PC-9 (cell line): ENCODE measurements at regions of chr16 and their contacts with region 1.

Region 1: DNA sequence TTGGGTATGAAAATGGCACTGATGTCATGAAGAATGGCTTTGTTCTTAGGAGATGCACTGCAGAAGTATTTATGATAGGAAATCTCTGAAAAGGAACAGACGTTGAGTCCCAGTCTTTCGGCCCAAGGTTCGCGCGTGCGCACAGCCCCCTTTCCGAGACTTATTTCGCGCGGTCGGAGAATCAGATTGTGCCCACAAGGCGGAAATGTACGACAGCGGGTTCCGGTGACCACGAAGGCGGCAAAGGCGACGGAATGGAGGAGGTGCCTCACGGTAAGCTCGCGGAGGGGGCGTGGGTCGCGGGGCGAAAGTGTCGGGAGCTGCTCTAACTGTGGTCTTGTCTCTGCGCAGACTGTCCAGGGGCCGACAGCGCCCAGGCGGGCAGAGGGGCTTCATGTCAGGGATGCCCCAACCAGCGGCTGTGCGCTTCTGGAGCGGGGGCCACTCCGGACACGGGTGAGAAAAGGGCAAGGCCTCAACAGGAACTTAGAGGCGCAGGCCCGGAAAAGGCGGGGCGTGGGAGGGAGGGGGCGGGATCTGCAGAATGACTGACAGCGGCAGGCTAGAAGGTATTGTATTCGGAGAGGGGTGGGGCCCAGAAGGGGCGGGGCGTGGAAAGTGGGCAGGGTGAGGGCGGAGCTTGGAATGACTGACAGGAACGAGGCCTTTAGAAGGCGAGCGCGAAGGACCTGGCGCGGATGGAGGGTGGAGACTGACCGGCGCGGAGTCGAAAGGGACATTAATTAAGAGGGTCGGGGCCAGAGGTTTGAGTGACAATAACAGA is at the start of gene NUBP1:
- DNase-seq: peak; percentile 93 to 99
- H3K4me3 ChIP-seq: peak within 1 kb of the TSS; percentile 69
- H3K27ac ChIP-seq: peak within 1 kb of the TSS; percentile 88
- H3K4me1 ChIP-seq: peaks cover 14% of the 10 kb centered on the region
- H3K27me3 ChIP-seq: no peaks in the 10 kb centered on the region
- CTCF ChIP-seq: no peak
- total RNA-seq, gene NUBP1: 21.0 and 28.9 TPM in 2 replicates

Region 2: GRCh38 chr16:10876799-10877341 is 133.1 kb after region 1 on chr16 and contains the start of gene CIITA:
- CTCF ChIA-PET with region 1: no interaction called
- POLR2A ChIA-PET with region 1: no interaction called
- intact Hi-C with region 1: loop called (anchors 5 kb)
- DNase-seq: peak; percentile 68 to 72
- H3K4me3 ChIP-seq: no peak within 1 kb of the TSS
- H3K27ac ChIP-seq: no peak within 1 kb of the TSS
- H3K4me1 ChIP-seq: peaks cover 3% of the 10 kb centered on the region
- H3K27me3 ChIP-seq: peaks cover 26% of the 10 kb centered on the region
- CTCF ChIP-seq: no peak
- total RNA-seq, gene CIITA: 1.2 and 1.7 TPM in 2 replicates

Region 3: GRCh38 chr16:10942233-10943063 is 198.6 kb after region 1 on chr16 and contains the start of gene DEXI:
- CTCF ChIA-PET with region 1: no interaction called
- POLR2A ChIA-PET with region 1: interaction called, 6 read pairs
- intact Hi-C with region 1: loop called (anchors 1 kb)
- DNase-seq: peak; percentile 74 to 98
- H3K4me3 ChIP-seq: peak within 1 kb of the TSS; percentile 56
- H3K27ac ChIP-seq: no peak within 1 kb of the TSS; the same call in 1 of the 2 replicates
- H3K4me1 ChIP-seq: peaks cover 45% of the 10 kb centered on the region
- H3K27me3 ChIP-seq: no peaks in the 10 kb centered on the region
- CTCF ChIP-seq: peak; percentile 54
- total RNA-seq, gene DEXI: 33.1 and 42.4 TPM in 2 replicates